GM10248 (cell line): ENCODE measurements at regions of chr10 and their contacts with region 1.

Region 1: DNA sequence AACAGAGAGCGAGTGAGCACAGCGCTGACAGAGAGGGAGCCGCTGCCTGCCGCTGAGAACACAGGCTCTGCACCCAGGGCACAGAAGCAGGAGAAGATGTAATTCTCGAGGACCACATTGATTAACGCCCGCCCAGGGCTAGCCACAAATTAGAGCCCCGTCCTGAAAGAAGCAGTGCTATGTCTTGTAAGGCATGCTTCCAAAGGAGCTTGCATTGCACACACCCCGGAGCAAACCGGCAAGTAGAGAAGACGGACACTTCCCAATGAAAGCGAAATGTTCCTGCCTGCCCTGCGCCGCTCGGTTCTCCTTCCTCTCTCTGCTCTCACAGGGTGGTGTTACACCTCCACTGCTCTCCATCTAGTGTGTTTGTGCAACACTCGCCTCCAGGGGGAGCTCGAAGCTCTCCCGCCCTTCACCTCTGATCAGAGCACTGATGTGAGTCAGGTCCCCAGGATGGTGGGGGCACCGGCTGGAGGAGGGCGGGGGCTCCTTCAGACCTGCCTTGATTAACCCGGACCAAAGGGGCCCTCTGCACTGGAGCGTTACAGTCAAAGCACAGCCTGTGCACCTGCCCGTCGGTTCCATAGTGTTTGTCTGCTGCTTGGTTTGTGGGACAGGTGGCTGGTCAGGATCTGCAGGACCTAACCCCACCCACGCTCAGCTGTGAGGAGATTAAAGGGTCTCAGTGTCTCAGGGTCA is 316.5 kb downstream of the ADARB2 start:
- DNase-seq: peak; percentile 82
- CTCF ChIP-seq: peak; percentile 83

Region 2: GRCh38 chr10:1398626-1399410 is 22.0 kb before region 1 on chr10:
- CTCF ChIA-PET with region 1: no interaction called
- POLR2A ChIA-PET with region 1: no interaction called
- DNase-seq: no peak
- CTCF ChIP-seq: no peak

Region 3: DNA sequence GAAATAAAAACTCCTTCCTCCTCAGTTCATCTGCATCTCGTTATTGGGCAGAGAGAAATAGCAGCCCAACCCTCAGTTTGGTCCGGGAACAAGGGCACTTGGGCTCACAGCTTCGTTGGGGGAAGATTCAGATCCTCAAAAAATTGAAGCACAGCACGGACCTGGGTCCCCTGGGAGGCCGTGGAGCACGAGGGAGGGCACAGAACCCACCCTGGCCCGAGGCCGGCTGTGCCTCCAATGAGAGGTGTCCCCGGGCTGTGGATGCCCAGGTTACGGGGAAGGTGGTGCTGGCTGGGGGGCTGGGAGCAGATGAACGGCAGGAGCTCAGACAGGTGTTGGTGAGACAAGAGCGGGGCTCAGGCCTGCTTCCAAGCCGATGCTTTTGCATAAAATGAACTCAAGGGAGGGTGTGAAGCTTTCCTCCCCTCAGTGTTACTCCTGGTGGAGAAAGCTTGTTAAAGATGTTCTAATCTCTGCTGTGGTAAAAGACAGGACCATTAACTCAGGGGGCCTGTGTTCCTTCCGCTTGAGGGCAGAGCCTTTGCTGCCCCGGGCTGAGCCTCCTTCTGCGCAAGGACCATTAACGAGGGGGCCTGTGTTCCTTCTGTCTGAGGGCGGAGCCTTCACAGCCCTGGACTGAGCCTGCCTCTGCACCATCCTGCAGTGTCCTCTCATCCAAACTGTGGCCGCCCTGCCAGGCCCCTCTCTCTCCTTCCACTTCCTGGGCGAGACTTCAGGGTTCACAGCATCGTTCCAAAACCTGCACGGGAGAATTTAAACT is 14.3 kb after region 1 on chr10:
- CTCF ChIA-PET with region 1: interaction called, 18 read pairs
- POLR2A ChIA-PET with region 1: no interaction called
- DNase-seq: no peak
- CTCF ChIP-seq: no peak